Left ventricle myocardium inferior (tissue), 1 donor: ENCODE measurements at regions of chr6 and their contacts with region 1.

Region 1: GRCh38 chr6:89368107-89368506 is 15.6 kb upstream of the UBE2J1 start:
- DNase-seq: peak; percentile 57
- H3K4me3 ChIP-seq: no peak overlapping the region
- H3K27ac ChIP-seq: peak overlapping the region; percentile 40
- H3K4me1 ChIP-seq: peaks cover 46% of the 10 kb centered on the region
- H3K27me3 ChIP-seq: no peaks in the 10 kb centered on the region
- CTCF ChIP-seq: peak; percentile 87

Region 2: GRCh38 chr6:89242574-89243330 is 125.4 kb before region 1 on chr6:
- intact Hi-C with region 1: no loop called
- DNase-seq: no peak
- H3K4me3 ChIP-seq: no peak overlapping the region
- H3K27ac ChIP-seq: no peak overlapping the region
- H3K4me1 ChIP-seq: no peaks in the 10 kb centered on the region
- H3K27me3 ChIP-seq: no peaks in the 10 kb centered on the region
- CTCF ChIP-seq: peak; percentile 63

Region 3: DNA sequence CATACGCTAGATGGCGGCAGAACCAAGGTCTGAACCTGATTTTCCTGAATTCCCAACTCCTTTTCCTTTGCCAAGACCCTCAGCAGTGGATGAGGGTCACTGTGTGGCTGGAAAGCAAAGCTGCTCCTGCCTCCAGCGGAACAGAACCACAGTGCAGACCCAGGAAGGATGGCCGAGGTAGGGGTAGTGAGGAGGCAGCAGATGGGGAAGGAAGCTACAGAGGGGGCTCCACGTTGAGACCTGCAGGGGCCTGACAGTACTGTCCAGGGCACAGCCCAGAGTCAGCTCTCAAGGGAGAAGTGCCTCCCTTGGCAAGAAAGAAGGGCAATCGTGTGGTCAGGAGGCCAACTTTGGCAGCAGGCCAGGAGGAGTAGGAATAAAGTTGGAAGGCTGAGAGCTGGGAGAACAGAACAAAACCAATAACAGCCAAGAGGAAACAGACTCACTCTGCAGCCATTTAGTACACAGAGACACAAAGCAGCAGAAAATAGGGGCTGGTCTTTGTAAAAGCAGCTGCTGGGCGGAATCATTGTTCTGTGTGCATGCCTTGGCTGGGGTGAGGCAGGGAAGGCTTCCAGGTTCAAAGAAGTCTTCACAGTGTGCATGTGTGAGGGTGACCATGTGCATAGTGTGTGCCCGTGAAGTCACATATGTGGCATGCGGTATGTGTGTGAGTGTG is 56.1 kb before region 1 on chr6:
- intact Hi-C with region 1: loop called (anchors 10 kb)
- DNase-seq: peak; percentile 54
- H3K4me3 ChIP-seq: peak overlapping the region; percentile 39
- H3K27ac ChIP-seq: peak overlapping the region; percentile 85
- H3K4me1 ChIP-seq: peaks cover 42% of the 10 kb centered on the region
- H3K27me3 ChIP-seq: no peaks in the 10 kb centered on the region
- CTCF ChIP-seq: peak; percentile 71

Region 4: GRCh38 chr6:89430201-89430962 is 62.3 kb after region 1 on chr6:
- intact Hi-C with region 1: no loop called
- DNase-seq: no peak
- H3K4me3 ChIP-seq: no peak overlapping the region
- H3K27ac ChIP-seq: no peak overlapping the region
- H3K4me1 ChIP-seq: peaks cover 19% of the 10 kb centered on the region
- H3K27me3 ChIP-seq: no peaks in the 10 kb centered on the region
- CTCF ChIP-seq: no peak